ENCODE measurements at regions of chr2 and their contacts with region 1.

Region 1: GRCh38 chr2:10302479-10303180 is at the start of gene HPCAL1:
- DNase-seq: peak; percentile 40
- ATAC-seq: peak; percentile 86
- H3K4me3 ChIP-seq: peak within 1 kb of the TSS; percentile 69
- H3K27ac ChIP-seq: peak within 1 kb of the TSS; percentile 61
- H3K4me1 ChIP-seq: peaks cover 16% of the 10 kb centered on the region
- H3K27me3 ChIP-seq: no peaks in the 10 kb centered on the region; a peak in 1 of 4 replicates
- CTCF ChIP-seq: peak; percentile 41 to 52 (median 45); a peak in 5 of 6 replicates
- EP300 ChIP-seq: no peak
- POLR2A ChIP-seq: no peak
- RAD21 ChIP-seq: peak; percentile 19; the same call in 1 of the 2 replicates
- polyA plus RNA-seq, gene HPCAL1: 0.40 to 1.3 TPM

Region 2: DNA sequence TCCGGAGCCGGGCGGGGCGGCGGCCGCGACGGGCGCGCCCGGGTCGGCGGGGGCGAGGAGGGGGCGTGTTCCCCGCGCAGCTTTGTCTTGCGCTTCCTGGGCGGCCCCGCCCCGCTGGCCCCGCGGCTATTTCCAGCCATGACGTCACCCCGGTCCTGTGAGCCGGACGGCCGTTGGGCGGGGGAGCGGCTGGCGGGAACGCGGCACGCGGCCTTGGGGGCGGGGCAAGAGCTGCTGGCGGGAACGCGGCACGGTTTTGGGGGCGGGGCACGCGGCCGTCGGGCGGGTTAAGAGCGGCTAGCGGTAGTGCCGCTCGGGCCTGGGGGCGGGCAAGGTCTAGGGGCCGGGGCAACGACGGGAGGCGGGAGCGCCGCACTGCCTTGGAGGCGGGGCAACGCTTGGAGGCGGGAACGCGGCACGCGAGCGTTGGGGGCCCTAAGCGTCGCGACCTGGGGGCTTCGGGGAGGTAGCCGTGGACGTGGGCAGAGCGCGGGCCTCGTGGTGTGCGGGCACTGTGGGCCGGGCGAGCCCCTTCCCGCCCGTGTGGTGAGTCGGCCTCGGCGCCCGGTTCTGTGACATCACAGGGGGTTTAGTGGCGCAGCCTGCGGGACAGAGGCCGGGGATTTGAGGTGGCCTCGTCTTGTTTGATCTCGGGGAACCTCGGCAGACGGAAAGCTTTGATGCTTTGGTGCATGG is 258.6 kb before region 1 on chr2:
- CTCF ChIA-PET with region 1: no interaction called
- POLR2A ChIA-PET with region 1: no interaction called
- RAD21 ChIA-PET with region 1: no interaction called
- SMC1A ChIA-PET with region 1: no interaction called
- in situ Hi-C with region 1: no loop called
- intact Hi-C with region 1: no loop called
- DNase-seq: no peak
- ATAC-seq: peak; percentile 54
- H3K4me3 ChIP-seq: no peak overlapping the region
- H3K27ac ChIP-seq: no peak overlapping the region
- H3K4me1 ChIP-seq: no peaks in the 10 kb centered on the region
- H3K27me3 ChIP-seq: peaks cover 0 to 4% of the 10 kb centered on the region in 2 experiments; a peak in 1 of 4 replicates
- CTCF ChIP-seq: no peak
- EP300 ChIP-seq: no peak
- POLR2A ChIP-seq: no peak
- RAD21 ChIP-seq: no peak

Region 3: DNA sequence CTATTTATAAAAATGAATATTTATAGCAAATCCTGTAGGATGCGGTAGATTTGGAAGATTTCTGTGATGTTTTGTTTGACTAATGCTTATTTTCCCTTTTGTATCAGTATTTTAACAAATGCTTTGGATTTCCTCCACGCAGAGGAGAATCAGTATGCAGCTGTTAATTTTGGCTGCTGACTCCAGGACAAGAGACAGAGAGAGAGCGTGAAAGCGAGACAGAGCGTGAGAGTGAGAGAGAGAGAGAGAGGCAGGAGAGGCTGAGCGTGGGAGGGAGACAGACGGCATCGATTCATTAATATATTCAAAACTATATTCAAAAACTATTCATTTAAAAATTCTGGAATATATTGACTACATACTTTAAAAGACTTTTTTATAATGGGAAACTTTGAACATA is 117.6 kb before region 1 on chr2:
- CTCF ChIA-PET with region 1: no interaction called
- POLR2A ChIA-PET with region 1: no interaction called
- RAD21 ChIA-PET with region 1: no interaction called
- SMC1A ChIA-PET with region 1: no interaction called
- in situ Hi-C with region 1: no loop called
- intact Hi-C with region 1: no loop called
- DNase-seq: no peak
- ATAC-seq: no peak
- H3K4me3 ChIP-seq: no peak overlapping the region
- H3K27ac ChIP-seq: no peak overlapping the region
- H3K4me1 ChIP-seq: no peaks in the 10 kb centered on the region
- H3K27me3 ChIP-seq: no peaks in the 10 kb centered on the region
- CTCF ChIP-seq: no peak
- EP300 ChIP-seq: no peak
- POLR2A ChIP-seq: no peak
- RAD21 ChIP-seq: no peak

Region 4: GRCh38 chr2:10382354-10383061 is 79.9 kb after region 1 on chr2:
- CTCF ChIA-PET with region 1: interaction called, 9 read pairs
- POLR2A ChIA-PET with region 1: interaction called, 10 read pairs
- RAD21 ChIA-PET with region 1: interaction called, 13 read pairs
- SMC1A ChIA-PET with region 1: interaction called, 3 read pairs
- in situ Hi-C with region 1: no loop called
- intact Hi-C with region 1: no loop called
- DNase-seq: peak; percentile 60
- ATAC-seq: peak; percentile 84
- H3K4me3 ChIP-seq: no peak overlapping the region
- H3K27ac ChIP-seq: no peak overlapping the region
- H3K4me1 ChIP-seq: peaks cover 29% of the 10 kb centered on the region
- H3K27me3 ChIP-seq: no peaks in the 10 kb centered on the region
- CTCF ChIP-seq: no peak
- EP300 ChIP-seq: no peak
- POLR2A ChIP-seq: no peak
- RAD21 ChIP-seq: no peak